ENCODE measurements at regions of chrX and their contacts with region 1.

Region 1: DNA sequence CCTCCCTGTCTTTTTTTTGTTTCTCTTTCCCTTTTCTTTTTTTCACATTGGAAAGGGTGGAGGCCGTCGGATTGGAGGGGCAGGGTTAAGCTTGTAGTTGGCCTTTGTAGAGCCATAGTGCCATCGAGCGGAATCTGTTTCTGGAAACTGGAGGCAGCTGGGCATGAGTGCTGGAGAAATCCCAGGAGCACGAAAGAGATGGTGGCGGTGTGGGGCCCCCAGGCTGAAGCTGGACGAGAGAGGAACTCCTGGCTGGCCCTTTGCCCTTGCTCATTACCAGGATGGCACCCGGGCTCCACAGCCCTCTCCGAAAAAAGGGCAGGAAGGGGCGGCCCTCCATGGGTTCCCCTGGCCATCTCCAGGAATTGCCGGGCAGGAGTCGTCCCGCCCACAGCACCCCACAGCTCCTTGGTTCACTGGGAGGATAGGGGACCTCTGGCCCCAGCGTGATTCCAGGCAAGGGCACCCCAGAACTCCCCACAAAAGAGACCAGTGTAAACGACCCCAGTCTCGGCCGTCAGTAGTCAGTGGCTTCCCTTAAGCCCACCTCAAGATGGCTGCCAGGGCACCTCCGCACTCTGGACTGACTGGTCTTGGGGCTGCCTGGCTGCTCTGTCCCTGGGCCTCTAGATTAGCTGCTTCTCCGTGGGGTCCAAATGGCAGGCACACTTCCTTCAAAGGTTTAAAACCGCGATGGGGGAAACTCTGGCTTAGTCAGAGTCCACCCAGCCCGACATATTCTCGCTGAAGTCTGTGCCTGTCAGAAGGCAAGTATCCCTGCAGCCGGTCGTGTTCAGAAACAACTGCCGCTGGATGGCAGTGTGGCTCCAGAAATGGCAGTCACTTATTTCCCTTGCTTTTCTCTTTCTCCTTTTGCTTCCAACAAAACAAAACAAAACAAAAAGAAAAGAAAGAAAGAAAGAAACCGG is 74.1 kb downstream of the NBDY start:
- DNase-seq: peak; percentile 73 to 98 (median 90)

Region 2: GRCh38 chrX:56623316-56623715 is 179.9 kb before region 1 on chrX:
- intact Hi-C with region 1: no loop called
- DNase-seq: no peak

Region 3: GRCh38 chrX:56978172-56978571 is 175.0 kb after region 1 on chrX:
- intact Hi-C with region 1: loop called (anchors 5 kb)
- DNase-seq: peak in 1 of 10 donors; percentile 19

Region 4: GRCh38 chrX:57918750-57919436 is 1115.7 kb after region 1 on chrX:
- intact Hi-C with region 1: loop called (anchors 10 kb)
- DNase-seq: peak in 1 of 10 donors; percentile 66

Measured in posterior cingulate gyrus (tissue), 11 donors.